Caco-2 (cell line): ENCODE measurements at regions of chr10 and their contacts with region 1.

Region 1: DNA sequence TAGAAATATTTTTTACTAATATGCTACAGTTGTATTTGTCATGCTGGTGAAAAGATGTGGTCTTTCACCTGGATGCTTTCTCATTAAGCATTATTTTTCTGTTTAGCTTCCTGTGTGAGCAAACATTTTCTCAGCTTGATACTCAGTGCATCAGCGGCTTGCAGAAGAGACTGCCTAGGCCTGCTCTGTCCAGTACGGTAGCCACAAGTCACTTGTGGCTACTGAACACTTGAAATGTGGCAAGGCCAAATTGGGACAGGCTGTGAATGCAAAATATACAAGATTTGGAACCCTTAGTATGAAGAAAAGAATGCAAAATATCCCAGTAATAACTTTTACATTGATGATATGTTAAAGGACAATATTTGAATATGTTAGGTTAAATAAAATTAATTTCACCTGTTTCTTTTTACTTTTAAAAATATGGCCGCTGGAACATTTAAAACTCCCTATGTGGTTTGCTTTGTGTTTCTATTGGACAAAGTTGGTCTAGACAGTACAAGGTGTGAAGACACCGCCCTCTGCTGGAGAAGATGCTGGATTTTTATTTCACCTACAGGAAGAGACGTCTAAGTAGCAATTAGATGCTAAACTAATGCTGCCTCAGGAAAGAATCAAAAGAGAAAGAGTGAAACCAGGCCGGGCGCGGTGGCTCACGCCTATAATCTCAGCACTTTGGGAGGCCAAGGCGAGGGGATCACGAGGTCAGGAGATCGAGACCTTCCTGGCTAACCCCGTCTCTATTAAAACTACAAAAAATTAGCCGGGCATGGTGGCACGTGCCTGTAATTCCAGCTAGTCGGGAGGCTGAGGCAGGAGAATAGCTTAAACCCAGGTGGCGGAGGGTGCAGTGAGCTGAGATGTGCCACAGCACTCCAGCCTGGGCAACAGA is 5.3 kb downstream of the SRGN start:
- DNase-seq: peak; percentile 88 to 91
- H3K4me3 ChIP-seq: no peak overlapping the region
- H3K4me3 Mint-ChIP-seq: no peak overlapping the region
- H3K27ac Mint-ChIP-seq: no peak overlapping the region
- H3K4me1 ChIP-seq: no peaks in the 10 kb centered on the region
- H3K4me1 Mint-ChIP-seq: peaks cover 7% of the 10 kb centered on the region
- H3K27me3 ChIP-seq: no peaks in the 10 kb centered on the region
- H3K27me3 Mint-ChIP-seq: peaks cover 11% of the 10 kb centered on the region
- CTCF ChIP-seq: peak; percentile 93 to 98

Region 2: GRCh38 chr10:68526626-68527307 is 566.4 kb before region 1 on chr10:
- CTCF ChIA-PET with region 1: no interaction called
- POLR2A ChIA-PET with region 1: no interaction called
- intact Hi-C with region 1: no loop called
- DNase-seq: no peak
- H3K4me3 ChIP-seq: peak overlapping the region; percentile 62
- H3K4me3 Mint-ChIP-seq: peak overlapping the region; percentile 84
- H3K27ac Mint-ChIP-seq: peak overlapping the region; percentile 89
- H3K4me1 ChIP-seq: peaks cover 9% of the 10 kb centered on the region
- H3K4me1 Mint-ChIP-seq: peaks cover 5% of the 10 kb centered on the region
- H3K27me3 ChIP-seq: no peaks in the 10 kb centered on the region
- H3K27me3 Mint-ChIP-seq: no peaks in the 10 kb centered on the region
- CTCF ChIP-seq: no peak

Region 3: DNA sequence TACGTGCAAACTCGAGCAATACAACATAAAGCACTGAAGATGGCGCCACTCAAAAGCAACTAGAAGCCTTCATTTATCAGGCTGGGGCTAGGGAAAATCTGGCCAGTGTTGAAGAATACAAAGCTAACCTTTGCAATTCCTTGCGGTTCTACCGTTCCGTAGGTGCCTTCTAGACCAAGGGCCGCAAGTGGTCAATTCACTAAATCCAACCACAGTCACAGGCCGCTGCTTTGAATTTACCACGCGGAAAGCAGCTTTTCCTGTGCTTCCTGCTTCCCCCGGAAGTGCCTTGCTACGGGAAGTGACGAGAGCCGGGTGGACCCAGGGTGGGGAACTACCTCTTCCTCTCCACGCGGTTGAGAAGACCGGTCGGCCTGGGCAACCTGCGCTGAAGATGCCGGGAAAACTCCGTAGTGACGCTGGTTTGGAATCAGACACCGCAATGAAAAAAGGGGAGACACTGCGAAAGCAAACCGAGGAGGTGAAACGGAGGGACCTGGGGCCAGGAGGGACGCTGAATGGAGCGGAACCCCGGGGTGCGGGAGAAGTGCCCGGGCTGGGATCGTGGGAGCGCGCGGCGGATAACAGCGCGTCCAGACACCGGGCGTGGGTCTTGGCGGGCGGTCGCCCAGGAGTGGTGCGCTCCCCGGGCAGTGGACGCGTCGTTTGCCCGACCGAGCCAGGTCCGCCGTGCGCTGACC is 137.2 kb before region 1 on chr10 and contains the start of gene DDX21:
- CTCF ChIA-PET with region 1: interaction called, 3 read pairs
- POLR2A ChIA-PET with region 1: no interaction called
- intact Hi-C with region 1: loop called (anchors 1 kb)
- DNase-seq: peak; percentile 96 to 97
- H3K4me3 ChIP-seq: peak within 1 kb of the TSS; percentile 95
- H3K4me3 Mint-ChIP-seq: peak within 1 kb of the TSS; percentile 92
- H3K27ac Mint-ChIP-seq: peak within 1 kb of the TSS; percentile 97
- H3K4me1 ChIP-seq: peaks cover 11% of the 10 kb centered on the region
- H3K4me1 Mint-ChIP-seq: no peaks in the 10 kb centered on the region
- H3K27me3 ChIP-seq: no peaks in the 10 kb centered on the region
- H3K27me3 Mint-ChIP-seq: no peaks in the 10 kb centered on the region
- CTCF ChIP-seq: peak; percentile 88 to 96
- total RNA-seq, gene DDX21: 239 and 243 TPM in 2 replicates

Region 4: DNA sequence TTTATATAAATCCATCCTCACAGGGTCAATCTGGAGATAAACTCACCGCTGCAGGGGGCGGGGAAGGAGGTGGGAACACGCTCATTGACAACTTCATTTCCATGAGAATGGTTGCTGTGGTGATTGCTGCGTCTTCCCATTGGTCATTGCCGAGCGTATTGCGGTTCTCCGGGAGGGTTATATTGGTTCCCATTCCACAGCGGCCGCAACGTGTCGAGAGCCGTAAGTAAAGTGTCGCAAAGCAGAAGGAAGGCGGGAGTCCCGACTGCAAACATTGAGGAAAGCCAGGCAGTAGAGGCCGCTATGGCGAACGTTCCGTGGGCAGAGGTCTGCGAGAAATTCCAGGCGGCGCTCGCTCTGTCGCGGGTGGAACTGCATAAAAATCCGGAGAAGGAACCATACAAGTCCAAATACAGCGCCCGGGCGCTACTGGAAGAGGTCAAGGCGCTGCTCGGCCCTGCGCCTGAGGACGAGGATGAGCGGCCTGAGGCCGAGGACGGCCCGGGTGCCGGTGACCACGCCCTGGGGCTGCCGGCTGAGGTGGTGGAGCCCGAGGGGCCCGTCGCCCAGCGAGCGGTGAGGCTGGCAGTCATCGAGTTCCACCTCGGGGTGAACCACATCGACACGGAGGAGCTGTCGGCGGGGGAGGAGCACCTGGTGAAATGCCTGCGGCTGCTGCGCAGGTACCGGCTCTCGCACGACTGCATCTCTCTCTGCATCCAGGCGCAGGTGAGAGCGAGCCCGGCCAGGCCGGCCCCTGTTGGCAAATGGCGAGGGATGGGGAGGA is 104.5 kb before region 1 on chr10 and contains the start of gene KIFBP:
- CTCF ChIA-PET with region 1: interaction called, 4 read pairs
- POLR2A ChIA-PET with region 1: no interaction called
- intact Hi-C with region 1: loop called (anchors 1 kb)
- DNase-seq: peak; percentile 99
- H3K4me3 ChIP-seq: peak within 1 kb of the TSS; percentile 76
- H3K4me3 Mint-ChIP-seq: peak within 1 kb of the TSS; percentile 81
- H3K27ac Mint-ChIP-seq: peak within 1 kb of the TSS; percentile 90
- H3K4me1 ChIP-seq: peaks cover 7% of the 10 kb centered on the region; the same call in 1 of the 2 replicates
- H3K4me1 Mint-ChIP-seq: peaks cover 41% of the 10 kb centered on the region
- H3K27me3 ChIP-seq: no peaks in the 10 kb centered on the region
- H3K27me3 Mint-ChIP-seq: no peaks in the 10 kb centered on the region
- CTCF ChIP-seq: peak; percentile 67 to 86
- total RNA-seq, gene KIFBP: 57.6 and 58.9 TPM in 2 replicates

Region 5: DNA sequence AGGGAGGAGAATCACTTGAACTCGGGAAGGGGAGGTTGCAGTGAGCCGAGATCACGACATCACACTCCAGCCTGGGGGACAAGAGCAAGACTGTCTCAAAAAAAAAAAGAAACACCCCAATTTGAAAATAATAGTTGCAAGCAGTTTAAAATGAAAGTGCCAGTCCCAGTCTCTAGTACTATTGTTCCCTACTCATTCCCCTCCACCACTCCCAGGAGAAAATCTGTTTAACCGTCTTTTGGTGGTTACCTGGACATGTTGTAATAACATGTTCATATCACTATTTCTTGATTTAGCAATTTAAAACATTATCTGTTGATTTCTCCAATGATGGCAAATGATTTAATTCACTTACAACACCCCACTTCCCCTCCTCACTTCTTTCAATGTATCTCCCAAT is 59.9 kb before region 1 on chr10:
- CTCF ChIA-PET with region 1: no interaction called
- POLR2A ChIA-PET with region 1: no interaction called
- intact Hi-C with region 1: loop called (anchors 2 kb)
- DNase-seq: no peak
- H3K4me3 ChIP-seq: no peak overlapping the region
- H3K4me3 Mint-ChIP-seq: no peak overlapping the region
- H3K27ac Mint-ChIP-seq: no peak overlapping the region
- H3K4me1 ChIP-seq: no peaks in the 10 kb centered on the region
- H3K4me1 Mint-ChIP-seq: no peaks in the 10 kb centered on the region
- H3K27me3 ChIP-seq: no peaks in the 10 kb centered on the region; the same call in 1 of the 2 replicates
- H3K27me3 Mint-ChIP-seq: peaks cover 13% of the 10 kb centered on the region
- CTCF ChIP-seq: no peak

Region 6: DNA sequence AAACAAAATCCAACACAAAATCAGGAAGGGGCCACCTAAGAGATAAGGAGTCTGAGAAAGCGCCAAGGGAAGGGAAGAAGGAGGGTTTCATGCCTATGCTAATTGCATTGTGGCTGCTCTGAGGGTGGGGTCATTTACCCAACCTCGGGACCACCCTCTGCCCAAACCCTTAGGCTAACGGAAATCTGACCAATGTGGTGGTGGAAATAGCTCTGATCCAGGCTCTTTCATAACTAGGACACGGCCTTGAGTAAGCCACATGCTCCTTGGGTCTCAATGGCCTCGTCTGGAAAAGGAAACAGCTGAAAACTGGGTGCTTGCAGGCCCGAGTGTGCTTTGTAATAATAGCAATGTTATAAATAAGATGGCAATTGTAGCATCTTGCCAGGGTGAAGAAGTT is 20.2 kb before region 1 on chr10:
- CTCF ChIA-PET with region 1: no interaction called
- POLR2A ChIA-PET with region 1: no interaction called
- intact Hi-C with region 1: no loop called
- DNase-seq: no peak
- H3K4me3 ChIP-seq: no peak overlapping the region
- H3K4me3 Mint-ChIP-seq: no peak overlapping the region
- H3K27ac Mint-ChIP-seq: no peak overlapping the region
- H3K4me1 ChIP-seq: no peaks in the 10 kb centered on the region
- H3K4me1 Mint-ChIP-seq: no peaks in the 10 kb centered on the region
- H3K27me3 ChIP-seq: no peaks in the 10 kb centered on the region; the same call in 1 of the 2 replicates
- H3K27me3 Mint-ChIP-seq: peaks cover 4% of the 10 kb centered on the region
- CTCF ChIP-seq: no peak

Region 7: DNA sequence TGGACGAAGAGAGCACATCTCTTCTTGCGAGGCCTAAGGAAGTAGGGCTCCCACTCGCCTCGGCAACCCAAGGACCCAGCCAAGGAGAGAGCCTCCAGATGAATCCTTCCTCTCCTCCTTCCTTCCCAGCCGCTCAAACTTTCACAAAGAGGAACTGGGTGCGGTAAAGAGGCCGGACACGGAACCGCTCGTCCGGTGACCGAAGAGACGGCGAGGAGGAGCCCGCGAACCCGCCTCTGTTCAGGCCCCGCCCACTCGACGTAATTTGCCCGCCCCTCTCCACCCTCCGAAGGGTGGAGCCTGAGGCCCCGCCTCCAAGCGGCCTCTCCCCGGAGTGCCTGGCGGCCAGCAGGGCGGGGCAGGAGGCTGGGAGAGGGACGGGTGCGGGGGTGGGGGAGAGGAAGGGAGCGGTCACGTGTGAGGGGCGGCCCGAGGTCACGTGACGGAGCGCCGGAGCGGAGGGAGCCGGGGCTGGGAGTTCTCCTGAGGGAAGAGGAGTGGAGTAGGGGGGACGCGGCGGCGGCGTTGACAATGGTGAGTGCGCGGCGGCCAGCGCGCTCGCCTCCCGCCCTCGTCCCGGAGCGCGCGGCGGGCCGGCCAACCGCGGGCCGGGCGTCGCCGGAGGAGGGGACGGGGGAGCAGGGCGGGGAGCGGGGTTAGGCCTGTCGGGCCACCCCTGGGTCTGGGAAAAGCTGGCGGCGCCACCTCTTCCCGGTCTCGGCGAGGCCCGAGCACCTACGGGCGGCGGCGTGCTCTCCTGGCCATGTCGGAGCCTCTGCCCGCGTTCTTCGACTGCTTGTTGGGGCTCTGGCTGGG is 30.8 kb after region 1 on chr10 and contains the start of gene VPS26A:
- CTCF ChIA-PET with region 1: interaction called, 4 read pairs
- POLR2A ChIA-PET with region 1: interaction called, 4 read pairs
- intact Hi-C with region 1: loop called (anchors 1 kb)
- DNase-seq: peak; percentile 100
- H3K4me3 ChIP-seq: peak within 1 kb of the TSS; percentile 95
- H3K4me3 Mint-ChIP-seq: peak within 1 kb of the TSS; percentile 97
- H3K27ac Mint-ChIP-seq: peak within 1 kb of the TSS; percentile 97
- H3K4me1 ChIP-seq: peaks cover 9% of the 10 kb centered on the region; the same call in 1 of the 2 replicates
- H3K4me1 Mint-ChIP-seq: no peaks in the 10 kb centered on the region
- H3K27me3 ChIP-seq: no peaks in the 10 kb centered on the region
- H3K27me3 Mint-ChIP-seq: no peaks in the 10 kb centered on the region
- CTCF ChIP-seq: no peak
- total RNA-seq, gene VPS26A: 133 and 143 TPM in 2 replicates

Region 8: DNA sequence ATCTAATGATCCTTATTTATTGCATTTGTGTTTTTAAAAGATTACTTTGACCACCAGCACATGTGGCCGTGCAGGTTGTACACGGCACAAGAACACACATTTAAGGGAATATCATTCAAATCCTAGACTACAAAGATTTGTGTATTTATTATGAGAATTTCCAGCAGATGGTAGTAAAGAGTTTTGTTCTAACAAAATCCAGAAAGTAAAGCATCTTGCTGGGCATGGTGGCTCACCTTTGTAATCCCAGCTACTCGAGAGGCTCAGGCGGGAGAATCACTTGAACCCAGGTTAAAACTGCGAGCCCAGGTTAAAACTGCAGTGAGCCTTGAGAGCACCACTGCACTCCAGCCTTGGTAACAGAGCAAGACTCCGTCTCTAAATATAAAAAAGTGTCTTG is 991.0 kb after region 1 on chr10:
- CTCF ChIA-PET with region 1: no interaction called
- POLR2A ChIA-PET with region 1: no interaction called
- intact Hi-C with region 1: no loop called
- DNase-seq: peak; percentile 45 to 53
- H3K4me3 ChIP-seq: no peak overlapping the region
- H3K4me3 Mint-ChIP-seq: no peak overlapping the region
- H3K27ac Mint-ChIP-seq: no peak overlapping the region
- H3K4me1 ChIP-seq: peaks cover 46% of the 10 kb centered on the region
- H3K4me1 Mint-ChIP-seq: peaks cover 30% of the 10 kb centered on the region
- H3K27me3 ChIP-seq: no peaks in the 10 kb centered on the region
- H3K27me3 Mint-ChIP-seq: peaks cover 6% of the 10 kb centered on the region
- CTCF ChIP-seq: peak; percentile 25 to 52